Kidney (tissue), 22 donors: ENCODE measurements at regions of chr2 and their contacts with region 1.

Region 1: DNA sequence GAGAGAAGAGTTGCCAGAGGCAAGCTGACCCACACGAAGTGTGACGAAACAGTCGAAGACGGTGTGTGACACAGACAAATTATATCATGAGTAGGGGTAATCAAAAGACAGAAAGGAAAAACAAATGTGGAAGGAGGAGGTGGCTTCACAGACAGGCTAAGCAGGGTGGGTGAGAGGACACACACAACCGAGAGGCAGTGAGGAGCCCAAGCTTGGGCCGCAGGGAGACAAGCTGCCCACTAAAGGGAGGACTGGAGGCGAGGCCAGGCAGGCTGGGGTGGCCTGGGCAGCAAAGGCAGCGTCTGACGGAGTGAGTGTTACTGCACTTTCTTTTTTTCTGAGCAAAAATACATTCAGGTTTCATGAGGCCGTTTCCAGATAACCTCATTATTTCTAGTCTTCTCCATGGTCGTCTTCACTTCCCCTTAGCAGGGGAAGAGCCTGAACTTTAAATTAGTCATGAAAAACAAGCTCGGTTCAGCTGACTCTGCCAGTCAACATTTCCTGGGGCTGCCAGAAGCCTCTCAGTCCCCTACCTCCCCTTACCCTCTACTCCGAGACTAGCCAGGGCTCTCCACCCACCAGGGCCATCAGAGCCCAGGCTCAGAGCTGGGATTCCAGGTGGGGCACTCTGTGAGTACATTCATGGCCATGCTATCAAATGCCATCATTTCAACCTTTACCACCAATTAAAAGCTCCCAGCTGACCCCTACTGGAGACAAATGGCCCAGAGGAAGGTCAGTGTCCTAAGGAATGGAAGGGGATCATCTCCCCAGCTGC is 13.8 kb upstream of the ZFP36L2 start:
- DNase-seq: no peak
- H3K4me3 ChIP-seq: no peak overlapping the region
- H3K27ac ChIP-seq: no peak overlapping the region
- H3K4me1 ChIP-seq: peaks cover 0 to 2% (median 0%) of the 10 kb centered on the region in 3 donors
- H3K27me3 ChIP-seq: no peaks in the 10 kb centered on the region
- CTCF ChIP-seq: no peak

Region 2: DNA sequence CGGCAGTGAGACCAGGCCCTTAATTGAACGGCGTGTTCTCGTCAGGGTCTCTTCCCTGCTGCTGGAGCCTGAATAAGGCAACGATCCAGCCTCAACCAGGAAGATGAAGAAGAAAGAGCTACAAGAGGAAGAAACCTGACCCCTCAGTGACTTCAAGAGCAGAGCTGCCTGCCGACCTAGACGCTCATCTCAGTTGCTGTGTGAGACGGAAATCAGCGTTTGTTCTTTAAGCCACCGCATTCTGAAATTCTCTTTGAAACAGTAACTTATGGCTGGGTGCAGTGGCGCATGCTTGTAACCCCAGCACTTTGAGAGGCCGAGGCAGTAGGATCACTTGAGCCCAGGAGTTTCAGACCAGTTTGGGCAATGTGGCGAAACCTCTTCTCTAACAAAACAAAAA is 716.8 kb before region 1 on chr2:
- intact Hi-C with region 1: no loop called
- DNase-seq: peak in 4 of 5 donors; percentile 39 to 61 (median 50)
- H3K4me3 ChIP-seq: no peak overlapping the region
- H3K27ac ChIP-seq: no peak overlapping the region
- H3K4me1 ChIP-seq: no peaks in the 10 kb centered on the region
- H3K27me3 ChIP-seq: no peaks in the 10 kb centered on the region
- CTCF ChIP-seq: no peak

Region 3: GRCh38 chr2:42844901-42845821 is 395.0 kb before region 1 on chr2:
- intact Hi-C with region 1: loop called (anchors 10 kb)
- DNase-seq: peak in 4 of 5 donors; percentile 60 to 96 (median 79)
- H3K4me3 ChIP-seq: no peak overlapping the region
- H3K27ac ChIP-seq: peak overlapping the region; percentile 7 to 34
- H3K4me1 ChIP-seq: peaks cover 5 to 13% (median 10%) of the 10 kb centered on the region in 3 donors
- H3K27me3 ChIP-seq: no peaks in the 10 kb centered on the region
- CTCF ChIP-seq: no peak